Mammary epithelial cell (primary cell): ENCODE measurements at regions of chr5 and their contacts with region 1.

Region 1: GRCh38 chr5:112146323-112147226 is 272.5 kb downstream of the EPB41L4A start:
- DNase-seq: peak; percentile 59
- H3K4me3 ChIP-seq: no peak overlapping the region
- H3K27ac ChIP-seq: no peak overlapping the region
- H3K4me1 ChIP-seq: peaks cover 16% of the 10 kb centered on the region
- H3K27me3 ChIP-seq: no peaks in the 10 kb centered on the region
- CTCF ChIP-seq: peak; percentile 74 to 80

Region 2: DNA sequence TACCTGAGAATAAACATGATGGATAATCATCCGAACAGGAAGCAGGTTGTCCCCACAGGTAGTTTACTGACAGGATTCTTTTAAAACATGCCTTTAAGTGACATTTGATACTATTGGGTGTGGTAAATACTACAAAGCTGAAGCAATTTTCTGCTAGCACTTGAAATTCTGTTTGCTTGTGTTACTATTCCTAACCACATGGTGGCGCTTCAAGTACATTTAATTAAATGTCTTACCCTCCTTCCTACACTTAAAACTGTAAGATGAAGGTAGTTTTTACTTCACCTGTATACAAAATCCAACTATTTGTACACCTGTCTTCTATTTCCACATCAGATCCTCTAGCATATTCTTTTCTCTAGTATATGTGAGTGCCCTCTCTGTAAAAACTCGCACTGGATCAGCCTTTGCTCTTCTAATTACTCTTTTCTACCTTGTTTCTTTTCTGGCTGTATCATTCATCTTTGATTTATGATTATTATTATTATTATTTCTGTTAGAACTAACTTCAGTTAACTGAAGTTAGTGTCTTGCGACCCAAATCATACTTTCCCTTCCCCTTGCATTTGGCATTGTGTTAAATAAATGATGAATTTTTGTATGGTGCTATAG is 1389.4 kb before region 1 on chr5:
- CTCF ChIA-PET with region 1: no interaction called
- dilution Hi-C with region 1: no loop called
- in situ Hi-C with region 1: no loop called
- intact Hi-C with region 1: loop called (anchors 5 kb)
- DNase-seq: peak; percentile 42
- H3K4me3 ChIP-seq: no peak overlapping the region
- H3K27ac ChIP-seq: no peak overlapping the region
- H3K4me1 ChIP-seq: no peaks in the 10 kb centered on the region
- H3K27me3 ChIP-seq: no peaks in the 10 kb centered on the region
- CTCF ChIP-seq: peak; percentile 52 to 61

Region 3: DNA sequence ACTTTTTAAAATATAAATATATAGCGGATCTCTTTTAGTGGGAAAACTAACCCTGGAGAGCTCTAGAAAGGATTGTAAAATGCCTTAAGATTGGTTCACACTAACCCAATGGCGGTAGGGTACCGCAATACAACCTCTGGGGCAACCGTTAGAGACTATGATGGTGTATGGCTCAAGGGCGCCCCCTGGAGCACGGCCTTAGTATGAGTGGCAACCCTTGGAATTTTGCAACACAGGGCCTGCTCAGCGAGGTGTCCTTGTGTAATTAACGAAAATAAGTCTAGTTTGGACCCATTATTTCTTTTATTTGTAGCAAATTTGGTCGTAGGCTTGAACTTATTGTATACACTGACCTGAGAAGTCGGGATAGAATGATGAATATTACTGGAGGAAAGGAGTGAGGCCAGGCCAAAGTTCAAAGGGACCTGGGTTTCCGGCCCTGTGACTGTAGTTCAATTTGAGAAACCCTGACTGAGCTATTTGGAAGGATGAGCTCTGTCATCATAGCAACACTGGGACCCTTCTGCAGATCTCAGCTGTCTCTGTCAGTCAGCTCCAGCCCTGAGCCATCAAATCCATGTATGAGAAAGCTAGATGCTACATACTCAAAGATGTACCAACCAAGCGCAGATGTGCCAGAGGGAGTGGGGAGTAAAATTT is 867.6 kb before region 1 on chr5:
- CTCF ChIA-PET with region 1: no interaction called
- dilution Hi-C with region 1: no loop called
- in situ Hi-C with region 1: no loop called
- intact Hi-C with region 1: loop called (anchors 2 kb)
- DNase-seq: peak; percentile 35
- H3K4me3 ChIP-seq: no peak overlapping the region
- H3K27ac ChIP-seq: no peak overlapping the region
- H3K4me1 ChIP-seq: no peaks in the 10 kb centered on the region
- H3K27me3 ChIP-seq: no peaks in the 10 kb centered on the region
- CTCF ChIP-seq: peak; percentile 82 to 91

Region 4: DNA sequence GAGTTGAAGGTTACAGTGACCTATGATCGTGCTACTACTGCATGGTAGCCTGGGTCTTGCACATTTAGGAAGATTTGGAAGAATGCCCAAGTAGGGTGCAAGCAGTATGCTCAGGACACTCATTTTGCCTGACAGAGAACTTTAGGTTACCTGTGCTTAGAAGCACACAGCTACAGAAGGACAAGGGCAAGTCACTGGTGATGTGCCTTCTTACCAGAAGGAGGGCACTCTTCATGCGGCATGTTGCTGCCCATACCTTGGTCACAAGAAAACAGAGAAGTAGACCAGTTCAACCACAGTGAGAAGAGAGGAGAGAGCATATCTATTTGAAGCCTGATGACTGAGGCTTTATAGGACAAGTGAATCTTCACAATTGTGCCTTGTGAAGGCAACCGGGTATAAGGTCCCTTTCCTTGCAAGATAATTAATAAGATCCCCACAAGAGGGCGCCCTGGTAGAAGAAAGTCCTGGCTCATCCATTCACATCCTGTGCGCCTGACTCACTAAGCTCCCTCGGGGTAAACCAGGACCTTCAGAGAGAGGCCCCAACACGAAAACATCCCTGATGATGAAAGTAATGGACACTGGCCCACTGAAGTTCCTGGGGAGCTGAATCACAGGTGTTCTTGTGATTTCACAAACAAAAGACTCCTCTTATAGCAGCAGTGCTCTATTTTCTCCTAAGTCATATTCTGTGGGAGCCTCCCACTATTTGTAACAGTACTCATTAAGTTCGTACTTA is 596.1 kb before region 1 on chr5:
- CTCF ChIA-PET with region 1: interaction called, 8 read pairs
- dilution Hi-C with region 1: no loop called
- in situ Hi-C with region 1: loop called (anchors 5 to 10 kb)
- intact Hi-C with region 1: loop called (anchors 1 kb)
- DNase-seq: peak; percentile 98
- H3K4me3 ChIP-seq: no peak overlapping the region
- H3K27ac ChIP-seq: peak overlapping the region; percentile 73
- H3K4me1 ChIP-seq: peaks cover 13% of the 10 kb centered on the region
- H3K27me3 ChIP-seq: no peaks in the 10 kb centered on the region
- CTCF ChIP-seq: peak; percentile 45 to 51

Region 5: GRCh38 chr5:111680737-111681413 is 465.7 kb before region 1 on chr5:
- CTCF ChIA-PET with region 1: no interaction called
- dilution Hi-C with region 1: no loop called
- in situ Hi-C with region 1: loop called in 1 of 2 experiments (anchors 10 kb)
- intact Hi-C with region 1: loop called (anchors 1 kb)
- DNase-seq: peak; percentile 96
- H3K4me3 ChIP-seq: no peak overlapping the region
- H3K27ac ChIP-seq: peak overlapping the region; percentile 67
- H3K4me1 ChIP-seq: peaks cover 28% of the 10 kb centered on the region
- H3K27me3 ChIP-seq: no peaks in the 10 kb centered on the region
- CTCF ChIP-seq: no peak

Region 6: GRCh38 chr5:111757355-111758283 is 389.0 kb before region 1 on chr5:
- CTCF ChIA-PET with region 1: no interaction called
- dilution Hi-C with region 1: no loop called
- in situ Hi-C with region 1: no loop called
- intact Hi-C with region 1: loop called (anchors 1 kb)
- DNase-seq: peak; percentile 93
- H3K4me3 ChIP-seq: peak overlapping the region; percentile 35 to 58 (median 39)
- H3K27ac ChIP-seq: peak overlapping the region; percentile 28
- H3K4me1 ChIP-seq: peaks cover 5% of the 10 kb centered on the region
- H3K27me3 ChIP-seq: no peaks in the 10 kb centered on the region
- CTCF ChIP-seq: peak; percentile 48 to 70

Region 7: GRCh38 chr5:111853748-111854147 is 292.8 kb before region 1 on chr5:
- CTCF ChIA-PET with region 1: no interaction called
- dilution Hi-C with region 1: no loop called
- in situ Hi-C with region 1: loop called in 1 of 2 experiments (anchors 25 kb)
- intact Hi-C with region 1: loop called (anchors 1 kb)
- DNase-seq: no peak
- H3K4me3 ChIP-seq: no peak overlapping the region
- H3K27ac ChIP-seq: no peak overlapping the region
- H3K4me1 ChIP-seq: no peaks in the 10 kb centered on the region
- H3K27me3 ChIP-seq: peaks cover 3% of the 10 kb centered on the region
- CTCF ChIP-seq: no peak